ENCODE measurements at regions of chr12 and their contacts with region 1.

Region 1: GRCh38 chr12:117367011-117367638 is 5.7 kb upstream of the NOS1 start:
- DNase-seq: peak; percentile 96
- ATAC-seq: peak; percentile 78
- H3K4me3 ChIP-seq: no peak overlapping the region
- H3K27ac ChIP-seq: no peak overlapping the region
- H3K4me1 ChIP-seq: no peaks in the 10 kb centered on the region
- H3K27me3 ChIP-seq: peaks cover 31% of the 10 kb centered on the region
- CTCF ChIP-seq: peak; percentile 96

Region 2: DNA sequence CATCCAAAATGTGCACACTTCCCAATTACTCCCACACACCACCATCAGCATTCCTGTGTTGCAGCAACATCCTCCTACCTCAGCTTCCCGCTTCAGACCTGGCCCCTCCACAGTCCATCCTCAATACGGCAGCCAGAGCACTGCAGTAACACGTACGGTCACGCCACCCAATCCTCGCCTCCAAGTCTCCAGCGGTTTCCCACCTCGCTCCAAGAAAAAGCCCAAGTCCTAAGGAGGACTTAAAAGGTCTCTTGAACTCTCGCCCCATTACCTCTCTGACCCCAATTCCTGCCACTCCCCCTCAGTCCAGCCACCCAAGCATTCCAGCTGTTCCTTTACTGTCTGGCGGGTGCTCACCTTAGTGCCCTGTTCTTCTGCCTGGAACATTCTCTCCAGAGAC is 188.8 kb before region 1 on chr12:
- CTCF ChIA-PET with region 1: no interaction called
- POLR2A ChIA-PET with region 1: no interaction called
- intact Hi-C with region 1: no loop called
- DNase-seq: no peak
- ATAC-seq: no peak
- H3K4me3 ChIP-seq: no peak overlapping the region
- H3K27ac ChIP-seq: no peak overlapping the region
- H3K4me1 ChIP-seq: no peaks in the 10 kb centered on the region
- H3K27me3 ChIP-seq: no peaks in the 10 kb centered on the region
- CTCF ChIP-seq: no peak

Region 3: GRCh38 chr12:117190210-117190781 is 176.8 kb before region 1 on chr12 and contains the start of gene FBXO21:
- CTCF ChIA-PET with region 1: no interaction called
- POLR2A ChIA-PET with region 1: no interaction called
- intact Hi-C with region 1: no loop called
- DNase-seq: peak; percentile 93
- ATAC-seq: peak; percentile 85
- H3K4me3 ChIP-seq: peak within 1 kb of the TSS; percentile 81
- H3K27ac ChIP-seq: no peak within 1 kb of the TSS
- H3K4me1 ChIP-seq: peaks cover 16% of the 10 kb centered on the region
- H3K27me3 ChIP-seq: no peaks in the 10 kb centered on the region
- CTCF ChIP-seq: no peak
- total RNA-seq, gene FBXO21: 230 and 321 TPM in 2 replicates

Region 4: DNA sequence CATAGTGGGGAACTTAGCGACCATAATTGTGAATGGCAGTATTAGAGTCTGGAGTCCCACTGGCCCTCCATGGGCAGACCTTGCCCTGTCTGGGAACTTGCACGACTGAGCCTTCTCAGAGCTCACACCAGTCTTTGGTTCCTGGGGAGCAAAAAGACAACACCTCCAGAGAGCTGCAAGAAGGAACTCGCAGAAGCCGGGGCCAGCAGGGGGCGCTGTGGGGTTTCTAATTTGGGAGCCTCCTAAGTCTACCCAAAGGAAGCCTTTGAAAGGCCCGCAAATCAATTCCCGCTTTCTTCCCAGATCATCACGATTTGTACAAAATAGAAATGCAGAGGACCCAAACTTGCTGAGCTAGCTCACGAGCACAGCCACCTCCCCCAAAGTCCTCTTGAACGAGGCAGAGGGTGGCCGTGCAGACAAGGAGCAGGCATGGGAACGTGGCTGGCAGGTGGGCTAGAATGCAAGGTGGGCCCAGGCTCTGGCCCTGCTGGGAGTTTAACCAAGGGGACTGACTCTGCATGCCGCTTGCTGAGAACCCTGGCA is 130.6 kb before region 1 on chr12:
- CTCF ChIA-PET with region 1: interaction called, 7 read pairs
- POLR2A ChIA-PET with region 1: no interaction called
- intact Hi-C with region 1: loop called (anchors 1 kb)
- DNase-seq: peak; percentile 89
- ATAC-seq: peak; percentile 97
- H3K4me3 ChIP-seq: no peak overlapping the region
- H3K27ac ChIP-seq: no peak overlapping the region
- H3K4me1 ChIP-seq: no peaks in the 10 kb centered on the region
- H3K27me3 ChIP-seq: peaks cover 15% of the 10 kb centered on the region; the same call in 1 of the 2 replicates
- CTCF ChIP-seq: peak; percentile 97

Region 5: DNA sequence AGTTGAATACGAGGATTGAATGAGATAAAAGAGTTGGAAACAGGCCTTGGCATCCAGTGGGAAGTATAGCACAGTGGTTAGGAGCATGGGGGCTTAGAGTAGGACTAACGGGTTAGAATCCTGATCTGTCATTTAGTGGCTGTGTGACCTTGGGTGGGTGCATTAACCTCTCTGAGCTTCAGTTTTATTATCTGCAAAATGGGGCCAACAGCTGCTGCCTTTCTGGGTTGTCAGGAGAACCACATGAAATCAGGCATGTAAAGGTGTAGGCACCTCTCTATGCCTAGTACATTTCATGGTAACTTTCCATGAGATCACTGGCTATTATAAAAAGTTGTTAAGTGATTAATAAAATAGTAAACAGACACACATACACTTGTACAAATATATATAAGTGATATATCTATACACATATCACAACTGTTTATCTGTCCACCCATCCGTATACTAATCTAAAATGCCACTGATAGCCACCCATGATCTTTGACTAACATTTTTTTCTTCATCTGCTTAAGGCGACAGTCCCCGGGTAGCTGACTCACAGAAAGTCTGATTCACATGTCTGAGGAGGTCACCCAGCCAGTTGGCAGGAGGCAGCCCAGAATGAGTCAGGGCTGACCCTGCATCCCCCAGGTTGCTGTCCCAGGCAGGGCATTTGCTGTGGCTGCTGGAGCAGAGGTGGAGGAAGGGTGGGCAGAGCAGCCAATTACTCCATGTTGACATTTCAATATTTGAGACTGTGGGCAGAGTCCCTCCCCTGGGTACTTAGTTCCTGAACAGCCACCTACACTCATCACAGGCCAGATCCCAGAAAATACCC is 119.9 kb after region 1 on chr12:
- CTCF ChIA-PET with region 1: no interaction called
- POLR2A ChIA-PET with region 1: no interaction called
- intact Hi-C with region 1: loop called (anchors 5 kb)
- DNase-seq: peak; percentile 97
- ATAC-seq: peak; percentile 94
- H3K4me3 ChIP-seq: no peak overlapping the region; the same call in 1 of the 2 replicates
- H3K27ac ChIP-seq: peak overlapping the region; percentile 78
- H3K4me1 ChIP-seq: peaks cover 26% of the 10 kb centered on the region
- H3K27me3 ChIP-seq: no peaks in the 10 kb centered on the region
- CTCF ChIP-seq: no peak

Region 6: GRCh38 chr12:117671734-117672133 is 304.6 kb after region 1 on chr12:
- CTCF ChIA-PET with region 1: interaction called, 10 read pairs
- POLR2A ChIA-PET with region 1: no interaction called
- intact Hi-C with region 1: loop called (anchors 1 kb)
- DNase-seq: peak; percentile 83
- ATAC-seq: peak; percentile 65
- H3K4me3 ChIP-seq: no peak overlapping the region
- H3K27ac ChIP-seq: no peak overlapping the region
- H3K4me1 ChIP-seq: peaks cover 15% of the 10 kb centered on the region; the same call in 1 of the 2 replicates
- H3K27me3 ChIP-seq: no peaks in the 10 kb centered on the region
- CTCF ChIP-seq: peak; percentile 94

Region 7: DNA sequence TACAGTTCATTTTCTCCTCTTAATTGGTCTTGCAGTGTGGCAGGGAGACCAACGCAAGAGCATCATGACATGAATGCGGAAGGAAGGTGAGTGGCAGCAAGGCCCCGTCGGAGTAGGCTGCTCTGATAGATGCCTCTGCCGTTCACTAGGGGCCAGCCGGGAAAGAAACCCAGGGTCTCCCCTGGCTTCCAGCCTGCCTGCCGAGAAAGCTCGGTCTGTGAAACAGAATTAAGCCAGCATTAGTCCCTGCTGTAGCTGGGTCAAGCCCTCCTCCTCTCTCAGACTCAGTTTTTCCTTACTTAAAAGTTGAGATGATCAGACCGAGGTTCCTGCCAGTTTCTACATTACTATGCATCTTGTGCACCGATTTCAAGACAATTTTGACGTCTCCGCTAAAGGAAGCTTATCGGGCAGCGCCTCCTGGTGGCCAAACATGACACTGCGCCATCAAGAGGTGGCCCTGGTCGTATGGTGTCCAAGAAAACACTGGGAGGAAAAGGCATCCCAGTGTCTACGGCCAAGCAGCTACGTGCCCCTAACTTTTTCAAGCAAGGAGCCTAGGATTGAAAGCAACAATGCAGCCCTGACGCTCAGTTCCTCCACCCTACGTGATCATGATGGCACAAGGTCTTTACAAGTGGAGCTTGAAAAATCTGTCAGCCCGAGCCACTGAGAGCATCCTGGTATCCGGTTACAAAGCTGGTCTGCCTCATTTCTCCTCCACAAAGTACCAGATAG is 470.0 kb after region 1 on chr12:
- CTCF ChIA-PET with region 1: interaction called, 30 read pairs
- POLR2A ChIA-PET with region 1: no interaction called
- intact Hi-C with region 1: loop called (anchors 1 kb)
- DNase-seq: peak; percentile 95
- ATAC-seq: peak; percentile 38
- H3K4me3 ChIP-seq: no peak overlapping the region
- H3K27ac ChIP-seq: no peak overlapping the region
- H3K4me1 ChIP-seq: peaks cover 23% of the 10 kb centered on the region
- H3K27me3 ChIP-seq: no peaks in the 10 kb centered on the region
- CTCF ChIP-seq: peak; percentile 100

Region 8: GRCh38 chr12:118206107-118206412 is 838.9 kb after region 1 on chr12:
- CTCF ChIA-PET with region 1: no interaction called
- POLR2A ChIA-PET with region 1: no interaction called
- intact Hi-C with region 1: no loop called
- DNase-seq: no peak
- ATAC-seq: no peak
- H3K4me3 ChIP-seq: no peak overlapping the region
- H3K27ac ChIP-seq: no peak overlapping the region
- H3K4me1 ChIP-seq: no peaks in the 10 kb centered on the region
- H3K27me3 ChIP-seq: no peaks in the 10 kb centered on the region
- CTCF ChIP-seq: no peak